Calu3 (cell line): ENCODE measurements at regions of chrX and their contacts with region 1.

Region 1: DNA sequence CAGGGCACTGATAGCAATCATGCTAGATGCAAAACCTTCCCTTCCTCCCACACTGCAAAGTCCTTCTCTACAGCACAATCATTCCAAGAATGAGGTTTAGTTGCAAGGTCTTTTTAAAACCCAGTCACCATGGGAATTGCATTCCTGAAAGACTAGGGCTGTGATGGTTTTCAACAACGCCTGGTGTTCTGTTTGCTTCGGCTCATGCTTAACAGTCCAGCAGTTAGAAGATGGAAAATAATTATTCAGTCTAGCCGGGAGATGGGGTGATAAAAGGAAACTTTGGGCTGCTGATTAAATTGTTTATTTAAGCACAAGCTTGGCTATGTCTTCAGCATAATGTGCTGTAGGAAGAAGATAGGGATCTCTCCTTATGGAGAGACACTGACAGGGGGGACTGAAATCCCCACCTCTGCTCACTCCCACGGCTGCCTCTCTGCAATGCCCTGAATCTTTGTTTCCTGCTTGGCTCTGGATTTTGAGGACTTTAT is 211.4 kb downstream of the MID1IP1 start:
- DNase-seq: no peak
- H3K4me3 Mint-ChIP-seq: no peak overlapping the region
- H3K27ac Mint-ChIP-seq: no peak overlapping the region
- H3K4me1 Mint-ChIP-seq: peaks cover 69% of the 10 kb centered on the region
- H3K27me3 Mint-ChIP-seq: no peaks in the 10 kb centered on the region
- CTCF ChIP-seq: no peak

Region 2: GRCh38 chrX:38879631-38880220 is 132.9 kb before region 1 on chrX:
- CTCF ChIA-PET with region 1: no interaction called
- intact Hi-C with region 1: loop called (anchors 5 kb)
- DNase-seq: peak; percentile 8
- H3K4me3 Mint-ChIP-seq: peak overlapping the region; percentile 51
- H3K27ac Mint-ChIP-seq: peak overlapping the region; percentile 85
- H3K4me1 Mint-ChIP-seq: peaks cover 20% of the 10 kb centered on the region
- H3K27me3 Mint-ChIP-seq: no peaks in the 10 kb centered on the region
- CTCF ChIP-seq: no peak